ENCODE measurements at regions of chr3 and their contacts with region 1.

Region 1: GRCh38 chr3:187164885-187165543 is 25.7 kb upstream of the RPL39L start:
- DNase-seq: peak; percentile 46
- ATAC-seq: peak; percentile 70
- H3K4me3 Mint-ChIP-seq: no peak overlapping the region
- H3K27ac Mint-ChIP-seq: no peak overlapping the region
- H3K4me1 Mint-ChIP-seq: peaks cover 3% of the 10 kb centered on the region
- H3K27me3 Mint-ChIP-seq: peaks cover 40% of the 10 kb centered on the region

Region 2: DNA sequence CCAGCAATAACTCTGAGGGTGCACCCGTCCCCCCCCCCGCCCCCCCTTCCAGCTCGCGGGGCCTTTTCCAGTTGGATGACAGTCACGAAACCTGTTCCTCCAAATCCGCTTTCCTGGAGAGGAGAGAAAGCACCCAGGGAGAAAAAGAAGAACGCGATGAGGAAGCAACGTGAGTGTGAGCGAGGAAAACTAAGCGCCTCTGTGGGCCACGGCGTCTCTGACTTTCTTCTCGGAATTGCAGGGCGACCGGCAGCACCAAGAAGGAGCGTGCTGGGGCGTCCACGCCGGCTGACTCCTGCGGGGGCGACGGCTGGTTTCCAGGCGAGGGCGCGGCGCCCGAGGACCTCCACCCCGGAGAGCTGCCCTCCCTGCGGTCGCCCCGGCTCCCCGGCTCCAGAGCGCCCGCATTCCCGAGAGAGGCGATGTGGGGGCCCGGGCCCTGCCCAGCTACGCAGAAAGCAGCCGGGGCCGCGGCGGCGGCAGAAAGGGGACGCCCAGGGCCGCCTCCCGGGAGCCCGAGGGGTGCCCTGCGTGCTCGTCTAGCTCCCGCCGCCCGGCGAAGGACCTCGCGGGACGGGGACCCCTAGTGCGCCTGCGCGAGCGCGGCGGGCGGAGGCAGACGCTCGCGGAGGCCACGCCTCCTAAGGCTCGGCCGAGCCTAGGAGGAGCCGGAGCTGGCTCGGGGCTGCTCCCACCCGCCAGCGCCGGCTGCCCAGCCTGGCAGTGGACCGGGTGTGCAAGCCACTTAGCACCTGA is 337.9 kb before region 1 on chr3:
- CTCF ChIA-PET with region 1: interaction called, 12 read pairs
- DNase-seq: peak; percentile 89
- ATAC-seq: peak; percentile 96
- H3K4me3 Mint-ChIP-seq: peak overlapping the region; percentile 72
- H3K27ac Mint-ChIP-seq: peak overlapping the region; percentile 54
- H3K4me1 Mint-ChIP-seq: peaks cover 28% of the 10 kb centered on the region
- H3K27me3 Mint-ChIP-seq: peaks cover 43% of the 10 kb centered on the region

Region 3: DNA sequence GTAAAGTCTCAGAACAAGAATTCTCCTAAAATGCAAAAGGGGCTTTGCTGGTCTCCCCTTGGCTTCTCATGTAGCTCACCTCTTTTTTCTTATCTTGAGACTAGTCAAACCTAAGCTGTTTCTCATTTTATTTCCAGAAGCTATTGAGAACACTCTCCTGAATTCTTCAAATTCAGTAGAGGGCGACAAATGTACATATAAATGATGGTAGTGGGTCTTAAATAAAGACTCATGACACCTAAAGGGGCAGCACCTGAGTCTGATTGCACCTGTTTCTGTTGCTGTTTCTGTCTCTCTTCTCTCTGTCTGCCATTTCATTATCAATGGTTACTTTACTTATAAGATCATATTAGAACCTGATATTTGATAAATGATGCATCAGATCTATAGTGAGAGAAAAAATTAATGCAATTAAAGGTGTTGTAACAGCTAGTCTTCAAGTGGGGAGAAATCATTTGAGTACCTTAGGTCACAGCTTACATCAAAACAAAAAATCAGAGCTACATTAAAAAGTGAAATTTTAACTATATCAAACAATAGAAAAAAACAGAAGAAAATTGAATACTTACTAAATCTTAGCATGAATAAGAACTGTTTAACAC is 315.5 kb before region 1 on chr3:
- CTCF ChIA-PET with region 1: interaction called, 30 read pairs
- DNase-seq: no peak
- ATAC-seq: peak; percentile 90
- H3K4me3 Mint-ChIP-seq: no peak overlapping the region
- H3K27ac Mint-ChIP-seq: no peak overlapping the region
- H3K4me1 Mint-ChIP-seq: peaks cover 11% of the 10 kb centered on the region
- H3K27me3 Mint-ChIP-seq: peaks cover 14% of the 10 kb centered on the region

Region 4: GRCh38 chr3:187101184-187102072 is 63.6 kb before region 1 on chr3:
- CTCF ChIA-PET with region 1: interaction called, 10 read pairs
- DNase-seq: peak; percentile 71
- ATAC-seq: peak; percentile 81
- H3K4me3 Mint-ChIP-seq: peak overlapping the region; percentile 52
- H3K27ac Mint-ChIP-seq: peak overlapping the region; percentile 52
- H3K4me1 Mint-ChIP-seq: peaks cover 52% of the 10 kb centered on the region
- H3K27me3 Mint-ChIP-seq: peaks cover 2% of the 10 kb centered on the region

Region 5: DNA sequence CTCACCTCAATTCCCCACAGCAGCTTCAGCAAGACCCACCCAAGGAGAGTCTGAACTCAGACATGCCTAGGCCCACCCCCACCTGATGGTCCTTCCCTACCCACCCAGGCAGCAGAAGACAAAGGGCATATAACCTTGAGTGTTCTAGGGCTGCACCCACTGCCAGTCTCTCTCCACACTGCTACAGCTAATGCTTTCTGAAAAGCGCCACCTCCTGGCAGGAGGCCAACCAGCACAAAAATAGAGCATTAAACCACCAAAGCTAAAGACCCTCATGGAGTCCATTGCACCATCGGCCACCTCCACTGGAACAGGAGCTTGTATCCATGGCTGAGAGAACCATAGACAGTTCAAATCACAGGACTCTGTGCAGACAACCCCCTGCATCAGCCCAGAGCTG is 14.4 kb before region 1 on chr3:
- CTCF ChIA-PET with region 1: interaction called, 20 read pairs
- DNase-seq: peak; percentile 75
- ATAC-seq: peak; percentile 63
- H3K4me3 Mint-ChIP-seq: no peak overlapping the region
- H3K27ac Mint-ChIP-seq: no peak overlapping the region
- H3K4me1 Mint-ChIP-seq: no peaks in the 10 kb centered on the region
- H3K27me3 Mint-ChIP-seq: peaks cover 44% of the 10 kb centered on the region

Region 6: GRCh38 chr3:187208159-187208558 is 43.1 kb after region 1 on chr3:
- CTCF ChIA-PET with region 1: no interaction called
- DNase-seq: no peak
- ATAC-seq: no peak
- H3K4me3 Mint-ChIP-seq: no peak overlapping the region
- H3K27ac Mint-ChIP-seq: no peak overlapping the region
- H3K4me1 Mint-ChIP-seq: no peaks in the 10 kb centered on the region
- H3K27me3 Mint-ChIP-seq: peaks cover 31% of the 10 kb centered on the region

Region 7: GRCh38 chr3:187223799-187224198 is 58.8 kb after region 1 on chr3:
- CTCF ChIA-PET with region 1: interaction called, 11 read pairs
- DNase-seq: no peak
- ATAC-seq: no peak
- H3K4me3 Mint-ChIP-seq: no peak overlapping the region
- H3K27ac Mint-ChIP-seq: no peak overlapping the region
- H3K4me1 Mint-ChIP-seq: no peaks in the 10 kb centered on the region
- H3K27me3 Mint-ChIP-seq: peaks cover 7% of the 10 kb centered on the region